ENCODE measurements at regions of chr6 and their contacts with region 1.

Region 1: GRCh38 chr6:110682460-110682853 is 132.8 kb downstream of the CDK19 start:
- DNase-seq: peak; percentile 85
- ATAC-seq: peak; percentile 100
- H3K4me3 ChIP-seq: no peak overlapping the region
- H3K27ac ChIP-seq: no peak overlapping the region; the same call in 1 of the 2 replicates
- H3K4me1 ChIP-seq: 0 out of 2 replicates have a peak, but pooled peaks cover 6% of the 10 kb centered on the region
- H3K27me3 ChIP-seq: no peaks in the 10 kb centered on the region
- CTCF ChIP-seq: peak; percentile 59 to 83 (median 70); a peak in 5 of 6 replicates
- EP300 ChIP-seq: no peak
- POLR2A ChIP-seq: no peak
- RAD21 ChIP-seq: peak; percentile 99

Region 2: GRCh38 chr6:110618591-110619267 is 63.7 kb before region 1 on chr6:
- CTCF ChIA-PET with region 1: interaction called, 22 read pairs
- POLR2A ChIA-PET with region 1: no interaction called
- RAD21 ChIA-PET with region 1: interaction called, 10 read pairs
- SMC1A ChIA-PET with region 1: interaction called, 6 read pairs
- in situ Hi-C with region 1: no loop called
- intact Hi-C with region 1: no loop called
- DNase-seq: peak; percentile 11
- ATAC-seq: peak; percentile 71
- H3K4me3 ChIP-seq: no peak overlapping the region
- H3K27ac ChIP-seq: no peak overlapping the region
- H3K4me1 ChIP-seq: peaks cover 11% of the 10 kb centered on the region
- H3K27me3 ChIP-seq: no peaks in the 10 kb centered on the region
- CTCF ChIP-seq: peak in 2 of 3 experiments; percentile 34 to 48; a peak in 4 of 6 replicates
- EP300 ChIP-seq: no peak
- POLR2A ChIP-seq: no peak
- RAD21 ChIP-seq: peak; percentile 47

Region 3: DNA sequence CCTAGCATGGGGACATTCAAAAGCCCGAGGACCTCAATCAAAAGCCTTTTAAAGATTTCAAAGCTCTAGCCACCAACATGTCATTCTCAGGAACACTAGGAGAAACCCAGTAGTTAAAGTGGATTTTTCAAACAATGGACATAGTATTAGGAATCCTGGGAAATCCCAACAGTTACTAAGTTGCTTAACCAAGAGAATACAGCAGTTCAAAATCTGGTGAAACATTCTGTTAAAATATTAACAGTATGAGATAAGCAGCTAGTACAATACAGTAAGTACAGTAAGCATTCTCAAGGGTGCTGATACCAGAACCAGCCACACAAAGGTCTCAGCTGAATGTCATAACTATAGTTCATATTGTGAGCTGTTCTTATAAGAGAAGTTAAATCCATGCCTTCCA is 64.2 kb after region 1 on chr6:
- CTCF ChIA-PET with region 1: no interaction called
- POLR2A ChIA-PET with region 1: no interaction called
- RAD21 ChIA-PET with region 1: no interaction called
- SMC1A ChIA-PET with region 1: no interaction called
- in situ Hi-C with region 1: no loop called
- intact Hi-C with region 1: no loop called
- DNase-seq: no peak
- ATAC-seq: no peak
- H3K4me3 ChIP-seq: no peak overlapping the region
- H3K27ac ChIP-seq: no peak overlapping the region
- H3K4me1 ChIP-seq: no peaks in the 10 kb centered on the region
- H3K27me3 ChIP-seq: no peaks in the 10 kb centered on the region
- CTCF ChIP-seq: no peak
- EP300 ChIP-seq: no peak
- POLR2A ChIP-seq: no peak
- RAD21 ChIP-seq: no peak

Region 4: DNA sequence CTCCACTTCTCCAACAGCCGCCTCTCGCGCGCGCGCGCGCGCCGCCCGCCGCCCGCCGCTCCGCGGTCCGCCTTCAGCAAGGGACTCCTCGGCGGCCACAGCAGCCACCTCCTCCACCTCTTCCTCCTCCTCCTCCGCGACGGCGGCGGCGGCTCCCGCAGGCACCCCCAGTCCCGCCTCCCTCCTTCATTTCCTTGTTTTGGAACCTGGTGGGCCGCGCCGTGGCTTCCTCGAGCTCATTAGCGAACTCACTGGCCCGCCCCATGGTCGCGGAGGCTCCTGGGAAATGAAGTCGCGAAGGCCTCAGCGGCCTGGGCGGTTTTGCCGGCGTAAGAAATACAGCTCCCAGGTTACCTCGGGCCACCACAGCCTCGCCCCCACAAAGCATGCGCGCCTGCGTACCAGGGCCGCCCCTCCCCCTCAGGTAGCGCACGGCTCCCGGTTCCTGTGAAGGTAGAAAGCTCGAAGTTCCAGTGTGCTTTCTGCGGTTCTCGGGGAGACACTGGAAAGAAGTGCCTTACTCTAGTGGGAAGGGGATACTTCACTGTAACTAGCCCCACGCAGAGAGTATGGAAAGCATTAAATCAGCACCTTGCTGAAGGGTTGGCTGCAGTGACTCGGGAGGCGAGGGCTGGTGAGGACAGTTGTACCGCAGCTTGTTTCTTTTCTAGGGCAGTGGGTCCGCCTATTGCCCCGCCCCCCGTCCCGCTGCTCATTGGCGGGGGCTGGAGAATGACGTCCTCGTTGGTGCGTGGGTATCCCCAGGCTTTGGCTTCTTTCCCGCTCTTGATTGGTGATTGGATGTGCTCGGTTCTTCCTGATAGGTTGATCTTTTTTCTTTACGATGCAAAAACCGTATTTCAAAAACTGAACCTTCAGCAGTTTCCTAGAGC is 133.0 kb after region 1 on chr6 and contains the start of gene CDK19:
- CTCF ChIA-PET with region 1: interaction called, 12 read pairs
- POLR2A ChIA-PET with region 1: interaction called, 3 read pairs
- RAD21 ChIA-PET with region 1: interaction called, 17 read pairs
- SMC1A ChIA-PET with region 1: interaction called, 7 read pairs
- in situ Hi-C with region 1: no loop called
- intact Hi-C with region 1: loop called (anchors 1 kb)
- DNase-seq: peak; percentile 96
- ATAC-seq: peak; percentile 89
- H3K4me3 ChIP-seq: peak within 1 kb of the TSS; percentile 77
- H3K27ac ChIP-seq: peak within 1 kb of the TSS; percentile 86
- H3K4me1 ChIP-seq: peaks cover 16% of the 10 kb centered on the region
- H3K27me3 ChIP-seq: no peaks in the 10 kb centered on the region
- CTCF ChIP-seq: no peak
- EP300 ChIP-seq: peak in 1 of 2 experiments; percentile 47; a peak in 2 of 4 replicates
- POLR2A ChIP-seq: peak; percentile 94
- RAD21 ChIP-seq: no peak
- polyA plus RNA-seq, gene CDK19: 4.6 to 10.1 TPM

Region 5: GRCh38 chr6:110944681-110945151 is 262.3 kb after region 1 on chr6:
- CTCF ChIA-PET with region 1: interaction called, 91 read pairs
- POLR2A ChIA-PET with region 1: no interaction called
- RAD21 ChIA-PET with region 1: interaction called, 71 read pairs
- SMC1A ChIA-PET with region 1: interaction called, 117 read pairs
- in situ Hi-C with region 1: loop called (anchors 5 kb)
- intact Hi-C with region 1: loop called (anchors 1 kb)
- DNase-seq: peak; percentile 94
- ATAC-seq: peak; percentile 99
- H3K4me3 ChIP-seq: peak overlapping the region; percentile 9; the same call in 1 of the 2 replicates
- H3K27ac ChIP-seq: peak overlapping the region; percentile 22; the same call in 1 of the 2 replicates
- H3K4me1 ChIP-seq: peaks cover 10% of the 10 kb centered on the region
- H3K27me3 ChIP-seq: no peaks in the 10 kb centered on the region
- CTCF ChIP-seq: no peak
- EP300 ChIP-seq: peak; percentile 99
- POLR2A ChIP-seq: no peak
- RAD21 ChIP-seq: no peak

Region 6: DNA sequence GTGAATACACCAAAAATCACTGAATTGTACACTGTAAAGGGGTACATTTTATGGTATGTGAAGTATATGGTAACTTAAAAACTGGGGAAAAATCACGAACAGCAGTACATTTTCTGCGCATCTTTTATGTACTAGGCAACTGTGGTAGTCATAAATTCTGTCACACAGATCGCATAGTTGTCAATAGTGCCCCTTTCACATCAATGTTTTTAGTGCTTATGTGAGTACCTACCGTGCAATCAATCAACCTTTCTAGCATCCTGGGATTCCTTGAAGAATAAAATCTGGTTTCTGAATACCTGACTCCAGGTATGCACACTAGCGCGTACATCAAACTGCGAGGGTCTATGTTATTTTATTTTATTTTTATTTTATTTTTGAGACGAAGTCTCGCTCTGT is 298.7 kb after region 1 on chr6:
- CTCF ChIA-PET with region 1: interaction called, 4 read pairs
- POLR2A ChIA-PET with region 1: no interaction called
- RAD21 ChIA-PET with region 1: no interaction called
- SMC1A ChIA-PET with region 1: interaction called, 10 read pairs
- in situ Hi-C with region 1: no loop called
- intact Hi-C with region 1: no loop called
- DNase-seq: no peak
- ATAC-seq: peak; percentile 16; the same call in 2 of the 3 replicates
- H3K4me3 ChIP-seq: peak overlapping the region; percentile 84
- H3K27ac ChIP-seq: peak overlapping the region; percentile 82
- H3K4me1 ChIP-seq: no peaks in the 10 kb centered on the region
- H3K27me3 ChIP-seq: no peaks in the 10 kb centered on the region
- CTCF ChIP-seq: no peak
- EP300 ChIP-seq: no peak
- POLR2A ChIP-seq: no peak
- RAD21 ChIP-seq: no peak

Region 7: DNA sequence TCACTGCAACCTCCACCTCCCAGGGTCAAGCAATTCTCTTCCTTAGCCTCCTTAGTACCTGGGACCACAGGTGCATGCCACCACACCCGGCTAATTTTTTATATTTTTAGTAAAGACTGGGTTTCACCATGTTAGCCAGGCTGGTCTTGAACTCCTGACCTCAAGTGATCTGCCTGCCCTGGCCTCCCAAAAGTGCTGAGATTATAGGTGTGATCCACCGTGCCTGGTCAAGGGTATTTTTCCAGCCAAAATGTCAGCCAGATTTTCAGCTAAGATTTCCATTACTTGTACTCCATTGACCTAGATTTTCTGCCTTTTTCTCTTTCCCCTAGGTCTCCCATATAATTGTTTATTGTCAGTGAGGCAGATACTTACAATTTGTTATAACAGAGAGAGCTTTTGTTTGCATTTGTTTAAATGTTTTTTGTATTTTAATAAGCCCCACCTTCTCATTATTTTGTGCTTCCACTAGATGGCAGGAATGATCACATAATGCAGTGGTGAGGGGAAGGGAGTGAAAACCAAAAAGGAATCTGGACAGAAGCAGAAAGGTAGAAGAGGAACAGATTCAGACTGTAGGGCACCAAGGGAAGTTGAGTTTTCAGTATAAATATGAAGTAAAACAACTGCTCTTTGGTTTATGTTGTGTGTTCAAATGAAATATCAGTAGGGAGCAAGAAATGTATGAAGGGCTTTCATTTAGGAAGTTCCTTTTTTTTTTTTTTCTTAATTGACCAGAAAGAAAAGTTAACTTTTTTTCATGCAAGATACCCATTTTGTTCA is 329.1 kb after region 1 on chr6:
- CTCF ChIA-PET with region 1: interaction called, 12 read pairs
- POLR2A ChIA-PET with region 1: no interaction called
- RAD21 ChIA-PET with region 1: interaction called, 4 read pairs
- SMC1A ChIA-PET with region 1: interaction called, 3 read pairs
- in situ Hi-C with region 1: no loop called
- intact Hi-C with region 1: no loop called
- DNase-seq: peak; percentile 15
- ATAC-seq: peak; percentile 90
- H3K4me3 ChIP-seq: no peak overlapping the region
- H3K27ac ChIP-seq: no peak overlapping the region
- H3K4me1 ChIP-seq: no peaks in the 10 kb centered on the region
- H3K27me3 ChIP-seq: no peaks in the 10 kb centered on the region
- CTCF ChIP-seq: peak; percentile 51 to 75 (median 53); a peak in 5 of 6 replicates
- EP300 ChIP-seq: no peak
- POLR2A ChIP-seq: no peak
- RAD21 ChIP-seq: peak; percentile 93

Measured in GM12878 (cell line).